Dendritic cell treated with granulocyte-macrophage colony-stimulating factor and Interleukin-4, amounts not matched to agents 40 ng/mL and 50 ng/mL, for 4 days (primary cell): ENCODE measurements at regions of chrX and their contacts with region 1.

Region 1: DNA sequence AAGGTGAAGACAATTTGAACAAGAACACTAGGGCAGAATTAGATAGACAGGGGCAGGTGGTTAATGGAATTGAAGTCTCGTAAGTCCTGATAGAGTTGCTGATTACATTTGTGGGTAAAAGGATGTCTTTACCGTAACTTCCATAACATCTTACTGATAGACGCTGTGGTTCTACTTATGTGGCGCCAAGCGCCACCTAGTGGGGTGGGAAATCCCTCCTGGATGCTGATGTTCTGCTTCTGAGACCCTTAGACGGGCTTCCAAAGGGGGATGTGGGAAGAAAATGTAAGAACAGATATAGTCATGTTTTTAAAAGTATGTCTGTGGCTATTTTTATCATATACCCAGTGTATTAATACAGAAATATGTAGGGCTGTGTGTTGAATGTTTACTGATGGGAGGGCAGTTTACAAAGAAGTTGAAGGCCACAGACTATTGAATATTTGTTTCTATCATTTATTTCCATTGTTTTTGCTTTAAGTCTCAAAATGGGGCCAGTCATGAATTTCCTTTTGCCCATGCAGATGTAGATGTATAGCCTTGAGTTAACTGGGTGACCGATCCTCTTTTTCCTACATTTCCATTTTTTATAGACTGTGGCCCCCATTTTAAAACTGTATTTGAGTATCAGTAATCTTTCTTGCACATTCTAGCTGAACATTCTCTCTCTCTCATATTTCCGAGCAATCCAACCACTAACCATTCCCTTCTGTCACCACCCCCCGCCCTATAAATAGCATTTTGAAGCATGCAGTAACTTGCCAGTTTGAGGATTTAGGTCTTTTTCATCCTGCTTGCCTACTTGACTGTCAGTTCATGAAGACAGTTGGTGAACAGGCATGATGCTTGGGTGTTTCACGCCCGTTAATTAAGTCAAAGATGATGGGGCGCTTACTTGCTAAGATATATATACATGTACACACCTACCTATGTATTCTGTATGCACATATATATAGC is 12.1 kb upstream of the TLR8 start:
- H3K4me3 Mint-ChIP-seq: no peak overlapping the region
- H3K27ac Mint-ChIP-seq: no peak overlapping the region
- H3K4me1 Mint-ChIP-seq: peaks cover 45% of the 10 kb centered on the region
- H3K27me3 Mint-ChIP-seq: no peaks in the 10 kb centered on the region

Region 2: DNA sequence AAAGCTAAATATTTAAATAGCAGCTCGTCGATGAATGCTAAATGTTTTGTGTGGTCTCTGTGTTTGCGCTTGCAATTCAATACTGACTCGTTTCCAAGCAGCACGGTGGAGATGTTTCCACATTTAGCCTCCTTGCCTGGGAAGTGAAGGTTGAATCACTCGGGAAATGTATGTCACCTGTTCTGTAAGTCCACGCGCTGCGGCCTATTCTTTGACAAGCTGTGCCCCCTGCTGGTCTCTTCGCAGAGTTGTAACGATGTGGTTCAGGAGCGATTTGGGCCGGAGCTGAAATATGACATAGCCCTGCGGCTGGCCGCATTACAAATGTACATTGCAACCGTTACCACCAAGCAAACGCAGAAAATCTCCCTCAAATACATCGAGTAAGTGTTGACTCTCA is 192.7 kb before region 1 on chrX:
- intact Hi-C with region 1: loop called (anchors 10 kb)
- H3K4me3 Mint-ChIP-seq: no peak overlapping the region
- H3K27ac Mint-ChIP-seq: no peak overlapping the region
- H3K4me1 Mint-ChIP-seq: no peaks in the 10 kb centered on the region
- H3K27me3 Mint-ChIP-seq: peaks cover 3% of the 10 kb centered on the region

Region 3: DNA sequence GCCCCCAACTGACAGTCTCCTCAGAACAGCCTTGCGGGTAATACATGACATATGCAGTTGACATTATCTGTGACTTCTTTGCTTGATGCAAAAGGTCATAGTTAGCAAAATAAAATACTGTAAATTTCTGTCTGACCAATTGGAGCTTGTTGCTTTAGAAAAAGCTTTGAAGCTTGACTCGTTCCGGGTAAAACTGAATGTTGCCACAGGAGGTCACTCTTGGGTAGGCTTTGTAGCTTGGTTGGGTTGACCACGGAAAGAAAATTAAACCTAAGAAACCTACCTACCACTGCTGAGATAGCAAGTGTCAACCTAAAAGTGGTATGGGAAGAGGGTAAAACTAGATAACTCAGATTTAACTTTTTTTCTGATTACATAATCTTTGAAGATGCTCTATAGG is 79.9 kb before region 1 on chrX:
- intact Hi-C with region 1: loop called (anchors 1 kb)
- H3K4me3 Mint-ChIP-seq: no peak overlapping the region
- H3K27ac Mint-ChIP-seq: no peak overlapping the region
- H3K4me1 Mint-ChIP-seq: peaks cover 13% of the 10 kb centered on the region
- H3K27me3 Mint-ChIP-seq: no peaks in the 10 kb centered on the region

Region 4: GRCh38 chrX:12843668-12844279 is 50.6 kb before region 1 on chrX:
- intact Hi-C with region 1: no loop called
- H3K4me3 Mint-ChIP-seq: no peak overlapping the region
- H3K27ac Mint-ChIP-seq: no peak overlapping the region
- H3K4me1 Mint-ChIP-seq: no peaks in the 10 kb centered on the region
- H3K27me3 Mint-ChIP-seq: no peaks in the 10 kb centered on the region

Region 5: GRCh38 chrX:12881914-12882313 is 12.4 kb before region 1 on chrX:
- intact Hi-C with region 1: no loop called
- H3K4me3 Mint-ChIP-seq: no peak overlapping the region
- H3K27ac Mint-ChIP-seq: peak overlapping the region; percentile 71
- H3K4me1 Mint-ChIP-seq: peaks cover 21% of the 10 kb centered on the region
- H3K27me3 Mint-ChIP-seq: no peaks in the 10 kb centered on the region

Region 6: DNA sequence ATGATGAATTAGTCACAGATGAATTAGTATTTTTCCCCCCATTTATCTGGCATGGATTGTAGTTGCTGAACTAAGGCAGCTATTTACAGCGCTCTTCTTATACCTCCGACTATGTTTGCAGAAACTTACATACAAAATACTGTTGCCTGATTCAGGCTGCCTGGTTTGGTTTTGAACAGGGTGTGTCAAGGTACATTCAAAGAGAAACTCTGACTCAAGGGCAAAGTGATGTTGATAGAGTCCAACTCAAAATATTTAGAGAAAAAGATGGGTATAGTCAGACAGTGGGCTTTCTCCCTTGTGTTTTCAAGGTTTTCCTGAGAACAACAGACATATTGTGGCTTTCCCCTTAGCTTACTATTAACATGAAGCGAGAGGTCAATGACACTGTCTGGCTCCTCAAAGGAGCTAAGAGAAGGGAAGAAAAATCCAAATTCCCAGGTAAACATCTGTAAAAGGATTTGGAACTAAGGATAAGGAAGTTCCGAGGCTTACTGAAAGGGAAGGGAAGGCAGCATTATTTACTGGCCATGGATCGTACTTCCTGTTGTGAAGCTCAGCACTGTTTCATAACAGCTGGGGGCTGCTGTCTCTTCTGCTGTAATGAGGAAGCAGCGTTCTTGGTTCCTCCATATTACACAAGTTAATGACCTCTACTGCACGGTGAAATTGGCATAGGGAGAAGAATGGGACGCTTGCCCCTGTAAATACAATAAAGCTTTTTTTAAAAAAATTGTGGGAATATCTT is 119.2 kb after region 1 on chrX:
- intact Hi-C with region 1: no loop called
- H3K4me3 Mint-ChIP-seq: no peak overlapping the region
- H3K27ac Mint-ChIP-seq: peak overlapping the region; percentile 74
- H3K4me1 Mint-ChIP-seq: peaks cover 47% of the 10 kb centered on the region
- H3K27me3 Mint-ChIP-seq: no peaks in the 10 kb centered on the region

Region 7: GRCh38 chrX:13074297-13075262 is 180.2 kb after region 1 on chrX:
- intact Hi-C with region 1: no loop called
- H3K4me3 Mint-ChIP-seq: no peak overlapping the region
- H3K27ac Mint-ChIP-seq: no peak overlapping the region
- H3K4me1 Mint-ChIP-seq: peaks cover 26% of the 10 kb centered on the region
- H3K27me3 Mint-ChIP-seq: no peaks in the 10 kb centered on the region